Ascending aorta (tissue), 2 donors: ENCODE measurements at regions of chr19 and their contacts with region 1.

Region 1: DNA sequence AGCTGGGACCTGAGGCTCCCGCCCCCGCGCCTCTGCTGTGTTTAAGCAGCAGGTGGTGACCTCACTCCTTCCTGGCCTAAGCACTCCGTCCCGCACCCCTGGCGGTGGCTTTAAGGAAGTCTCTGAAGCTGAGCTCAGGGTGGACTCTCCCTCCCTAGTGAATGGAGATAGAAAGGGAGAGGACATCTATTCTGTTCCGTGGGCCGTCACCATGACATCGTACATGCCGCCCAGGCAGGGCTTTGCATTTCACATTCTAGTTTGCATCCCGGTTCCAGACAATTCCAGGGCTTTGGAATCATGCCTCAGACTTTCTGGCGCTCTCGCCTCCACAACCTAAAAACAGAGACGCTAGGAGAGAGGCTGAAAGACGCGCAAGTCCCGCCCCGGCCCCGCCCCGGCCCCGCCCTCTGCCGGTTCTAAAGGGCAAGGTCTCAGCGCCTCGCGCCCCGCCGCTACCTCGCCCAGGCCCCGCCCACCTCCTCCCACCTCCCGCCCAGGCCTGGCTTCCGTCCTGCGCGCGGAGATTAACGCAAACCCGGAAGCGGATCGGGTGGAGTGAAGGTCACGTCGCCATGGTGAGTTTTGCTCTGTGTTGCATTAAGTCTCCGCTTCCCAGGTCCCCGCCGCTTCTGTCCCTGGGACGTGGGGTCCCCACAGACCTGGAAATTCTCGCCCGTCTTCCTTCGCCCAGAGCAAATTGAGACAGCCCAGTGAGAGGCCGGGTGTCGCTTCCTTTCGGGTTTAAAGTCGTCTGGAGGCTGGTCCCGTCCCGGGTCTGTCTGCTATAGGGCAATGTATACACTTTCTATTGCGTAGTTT is at the start of gene ZNF808:
- DNase-seq: peak; percentile 83 to 98
- H3K4me3 ChIP-seq: peak within 1 kb of the TSS; percentile 74 to 86
- H3K27ac ChIP-seq: peak within 1 kb of the TSS; percentile 92 to 93
- H3K4me1 ChIP-seq: peaks cover 0 to 2% of the 10 kb centered on the region in 2 donors
- H3K27me3 ChIP-seq: no peaks in the 10 kb centered on the region
- CTCF ChIP-seq: peak; percentile 65 to 82 (median 71)
- total RNA-seq, gene ZNF808: 9.0 TPM

Region 2: GRCh38 chr19:52369559-52370340 is 157.6 kb before region 1 on chr19 and contains the start of gene ZNF880:
- intact Hi-C with region 1: loop called (anchors 1 kb)
- DNase-seq: peak; percentile 55 to 95
- H3K4me3 ChIP-seq: peak within 1 kb of the TSS; percentile 78 to 94
- H3K27ac ChIP-seq: peak within 1 kb of the TSS; percentile 97 to 100
- H3K4me1 ChIP-seq: peaks cover 0 to 4% of the 10 kb centered on the region in 2 donors
- H3K27me3 ChIP-seq: no peaks in the 10 kb centered on the region
- CTCF ChIP-seq: peak in 2 of 3 experiments; percentile 7 to 13
- total RNA-seq, gene ZNF880: 21.5 TPM

Region 3: DNA sequence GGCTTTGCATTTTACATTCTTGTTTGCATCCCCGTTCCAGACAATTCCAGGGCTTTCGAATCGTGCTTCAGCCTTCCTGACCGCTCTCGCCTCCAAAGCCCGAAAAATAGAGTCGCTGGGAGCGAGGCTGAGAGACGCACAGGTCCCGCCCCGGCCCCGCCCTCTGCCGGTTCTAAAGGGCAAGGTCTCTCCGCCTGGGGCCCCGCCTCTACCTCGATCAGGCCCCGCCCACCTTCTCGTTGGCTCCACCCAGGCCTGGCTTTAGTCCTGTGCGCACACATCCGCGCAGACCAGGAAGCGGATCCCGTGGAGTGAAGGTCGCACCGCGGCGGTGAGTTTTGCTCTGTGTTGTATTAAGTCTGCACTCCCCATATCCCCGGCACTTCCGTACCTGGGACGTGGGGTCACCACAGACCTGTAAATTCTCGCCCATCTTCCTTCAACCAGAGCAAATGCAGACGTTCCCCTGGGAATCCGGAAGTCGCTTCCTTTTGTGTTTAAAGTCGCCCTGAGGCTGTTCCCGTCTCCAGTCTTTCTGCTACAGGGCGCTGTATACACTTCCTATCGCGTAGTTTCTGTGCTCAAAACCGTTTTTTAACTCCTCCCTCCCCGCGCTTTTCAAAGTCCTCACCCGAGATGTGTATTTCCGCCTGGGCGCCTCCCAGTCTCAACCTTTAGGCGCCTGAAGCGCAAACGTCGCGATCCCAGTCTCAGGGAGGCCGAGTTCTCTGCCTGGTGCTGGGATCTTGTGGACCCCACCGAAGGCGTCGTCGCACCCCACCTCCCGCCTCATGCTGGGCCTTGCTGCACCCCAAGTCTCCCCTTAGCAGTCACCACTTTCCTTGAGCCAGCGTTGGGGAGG is 42.9 kb after region 1 on chr19 and contains the start of gene ZNF701:
- intact Hi-C with region 1: loop called (anchors 2 kb)
- DNase-seq: peak; percentile 81 to 98
- H3K4me3 ChIP-seq: peak within 1 kb of the TSS; percentile 80 to 82
- H3K27ac ChIP-seq: peak within 1 kb of the TSS; percentile 75 to 86
- H3K4me1 ChIP-seq: peaks cover 0 to 5% of the 10 kb centered on the region in 2 donors
- H3K27me3 ChIP-seq: no peaks in the 10 kb centered on the region
- CTCF ChIP-seq: peak in 2 of 3 experiments; percentile 26 to 48
- total RNA-seq, gene ZNF701: 13.2 TPM

Region 4: DNA sequence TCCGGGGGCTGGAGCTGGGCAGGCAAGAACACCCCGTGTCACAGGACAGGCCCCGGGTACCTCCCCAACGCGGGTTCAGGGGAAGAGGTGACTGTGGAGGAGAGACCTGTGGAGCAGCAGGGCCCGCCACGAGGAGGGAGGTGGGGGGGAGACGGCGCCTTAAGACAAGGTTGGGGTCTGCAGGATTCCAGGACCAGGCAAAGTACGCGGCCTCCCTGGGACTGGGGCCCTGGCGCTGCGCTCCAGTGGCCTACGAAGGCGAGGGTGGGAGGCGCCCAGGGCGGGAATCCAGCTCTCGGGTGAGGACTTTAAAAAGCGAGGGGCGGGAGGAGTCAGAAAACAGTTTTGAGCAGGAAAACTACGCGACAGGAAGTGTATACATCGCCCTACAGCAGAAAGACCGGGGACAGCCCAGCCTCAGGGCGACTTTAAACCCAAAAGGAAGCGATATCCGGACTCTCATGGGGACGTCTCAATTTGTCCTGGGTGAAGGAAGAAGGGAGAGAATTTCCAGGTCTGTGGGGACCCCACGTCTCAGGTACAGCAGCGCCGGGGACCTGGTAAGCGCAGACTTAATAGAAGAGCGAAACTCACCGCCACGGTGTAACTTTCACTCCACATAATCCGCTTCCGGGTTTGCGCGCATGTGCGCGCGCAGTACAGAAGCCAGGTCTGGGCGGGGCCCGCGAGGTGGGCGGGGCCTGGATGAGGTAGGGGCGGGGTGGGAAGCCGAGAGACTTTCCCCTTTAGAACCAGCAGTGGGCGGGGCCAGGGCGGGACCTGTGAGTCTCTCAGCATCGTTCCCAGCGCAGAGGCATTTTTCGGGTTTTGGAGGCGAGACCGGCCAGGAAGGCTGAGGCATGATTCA is 110.6 kb after region 1 on chr19 and contains the start of gene ZNF83:
- intact Hi-C with region 1: loop called (anchors 1 kb)
- DNase-seq: peak; percentile 92 to 99
- H3K4me3 ChIP-seq: peak within 1 kb of the TSS; percentile 62 to 77
- H3K27ac ChIP-seq: peak within 1 kb of the TSS; percentile 87 to 92
- H3K4me1 ChIP-seq: peaks cover 0 to 14% of the 10 kb centered on the region in 2 donors
- H3K27me3 ChIP-seq: no peaks in the 10 kb centered on the region
- CTCF ChIP-seq: no peak
- total RNA-seq, gene ZNF83: 29.1 TPM

Region 5: GRCh38 chr19:52993323-52994178 is 466.2 kb after region 1 on chr19:
- intact Hi-C with region 1: loop called (anchors 5 kb)
- DNase-seq: peak; percentile 51 to 91
- H3K4me3 ChIP-seq: peak overlapping the region; percentile 61 to 71
- H3K27ac ChIP-seq: peak overlapping the region; percentile 79 to 81
- H3K4me1 ChIP-seq: peaks cover 8 to 10% of the 10 kb centered on the region in 2 donors
- H3K27me3 ChIP-seq: no peaks in the 10 kb centered on the region
- CTCF ChIP-seq: peak; percentile 38 to 77 (median 61)